Ascending aorta (tissue), 2 donors: ENCODE measurements at regions of chr18 and their contacts with region 1.

Region 1: DNA sequence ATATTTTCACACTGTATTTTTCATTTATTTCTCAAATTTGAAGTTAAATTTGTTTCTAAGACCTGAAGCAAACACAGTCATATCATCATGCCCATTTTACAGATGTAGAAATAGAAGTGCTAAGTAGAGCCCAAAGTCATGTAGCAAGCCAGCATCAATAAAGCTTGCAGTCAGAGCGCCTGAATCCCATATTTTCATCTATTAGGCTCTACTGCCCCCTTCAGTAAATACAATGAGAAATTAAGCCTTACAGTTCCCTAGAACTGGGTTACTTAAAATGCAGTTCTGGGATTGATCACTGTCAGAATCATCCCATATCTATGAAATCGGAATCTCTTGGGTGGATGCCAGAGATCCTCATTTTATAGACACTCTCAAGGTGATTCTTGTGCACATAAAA is 419.9 kb downstream of the TGIF1 start:
- DNase-seq: no peak
- H3K4me3 ChIP-seq: no peak overlapping the region
- H3K27ac ChIP-seq: no peak overlapping the region
- H3K4me1 ChIP-seq: peaks cover 0 to 6% of the 10 kb centered on the region in 2 donors
- H3K27me3 ChIP-seq: no peaks in the 10 kb centered on the region
- CTCF ChIP-seq: peak in 2 of 3 experiments; percentile 35 to 43

Region 2: DNA sequence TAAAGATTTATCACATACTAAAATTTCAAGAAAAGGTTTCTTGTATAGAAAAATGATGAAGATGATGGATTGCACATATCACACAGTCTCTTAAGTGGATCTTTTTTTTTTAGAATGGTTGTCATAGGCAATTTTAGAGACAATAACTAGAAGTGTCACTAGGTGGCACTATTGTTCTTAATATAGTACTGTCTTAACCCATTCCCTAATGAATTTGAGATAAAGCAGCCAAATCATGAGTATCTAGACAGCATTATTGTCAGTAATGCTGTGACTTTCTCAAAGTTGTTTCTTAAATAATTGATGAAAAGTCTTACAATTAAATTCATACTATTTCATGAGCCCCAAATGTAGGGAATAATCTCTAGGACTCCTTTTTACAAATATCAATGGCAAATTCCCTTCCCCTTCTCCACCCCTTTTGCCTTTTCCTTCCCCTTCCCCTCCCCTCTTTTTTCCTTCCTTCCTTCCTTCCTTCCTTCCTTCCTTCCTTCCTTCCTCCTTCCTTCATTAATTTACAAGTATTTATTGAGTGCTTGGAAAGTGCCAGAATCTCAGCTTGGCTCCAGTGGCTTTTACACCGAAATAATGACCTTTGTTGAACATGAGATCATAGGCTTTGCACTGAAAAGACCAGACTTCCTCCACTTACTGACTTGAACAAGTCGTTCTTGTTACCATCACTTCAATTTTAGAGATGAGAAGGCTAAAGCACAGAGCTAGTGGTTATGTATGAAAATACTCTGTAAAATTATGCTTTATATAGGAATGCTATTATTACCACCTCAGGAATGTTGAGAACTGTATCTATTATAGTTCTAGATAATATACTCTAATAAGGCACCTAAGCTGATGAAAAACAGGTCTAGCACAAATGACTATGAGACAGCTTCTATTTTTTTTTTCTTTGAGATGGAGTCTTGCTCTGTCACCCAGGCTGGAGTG is 588.1 kb before region 1 on chr18:
- intact Hi-C with region 1: loop called (anchors 10 kb)
- DNase-seq: no peak
- H3K4me3 ChIP-seq: no peak overlapping the region
- H3K27ac ChIP-seq: no peak overlapping the region
- H3K4me1 ChIP-seq: peaks cover 0 to 3% of the 10 kb centered on the region in 2 donors
- H3K27me3 ChIP-seq: no peaks in the 10 kb centered on the region
- CTCF ChIP-seq: peak; percentile 54 to 71 (median 69)

Region 3: GRCh38 chr18:3703732-3704176 is 166.1 kb before region 1 on chr18:
- intact Hi-C with region 1: loop called (anchors 1 kb)
- DNase-seq: peak in 1 of 2 donors; percentile 79
- H3K4me3 ChIP-seq: peak overlapping the region in 1 of 2 donors; percentile 22
- H3K27ac ChIP-seq: no peak overlapping the region
- H3K4me1 ChIP-seq: peaks cover 0 to 6% of the 10 kb centered on the region in 2 donors
- H3K27me3 ChIP-seq: no peaks in the 10 kb centered on the region
- CTCF ChIP-seq: peak; percentile 21 to 70 (median 64)

Region 4: GRCh38 chr18:3771121-3771971 is 98.5 kb before region 1 on chr18:
- intact Hi-C with region 1: loop called (anchors 2 kb)
- DNase-seq: peak; percentile 52 to 95
- H3K4me3 ChIP-seq: peak overlapping the region; percentile 57 to 58
- H3K27ac ChIP-seq: peak overlapping the region; percentile 45 to 58
- H3K4me1 ChIP-seq: peaks cover 0 to 9% of the 10 kb centered on the region in 2 donors
- H3K27me3 ChIP-seq: no peaks in the 10 kb centered on the region
- CTCF ChIP-seq: peak; percentile 94 to 95 (median 94)

Region 5: GRCh38 chr18:3906116-3906750 is 36.4 kb after region 1 on chr18:
- intact Hi-C with region 1: loop called (anchors 5 kb)
- DNase-seq: no peak
- H3K4me3 ChIP-seq: no peak overlapping the region
- H3K27ac ChIP-seq: peak overlapping the region; percentile 21 to 31
- H3K4me1 ChIP-seq: peaks cover 2 to 9% of the 10 kb centered on the region in 2 donors
- H3K27me3 ChIP-seq: no peaks in the 10 kb centered on the region
- CTCF ChIP-seq: no peak

Region 6: GRCh38 chr18:3947383-3947782 is 77.5 kb after region 1 on chr18:
- intact Hi-C with region 1: no loop called
- DNase-seq: no peak
- H3K4me3 ChIP-seq: no peak overlapping the region
- H3K27ac ChIP-seq: no peak overlapping the region
- H3K4me1 ChIP-seq: no peaks in the 10 kb centered on the region
- H3K27me3 ChIP-seq: no peaks in the 10 kb centered on the region
- CTCF ChIP-seq: no peak

Region 7: GRCh38 chr18:3966985-3967856 is 97.4 kb after region 1 on chr18:
- intact Hi-C with region 1: loop called (anchors 5 kb)
- DNase-seq: peak in 1 of 2 donors; percentile 77
- H3K4me3 ChIP-seq: no peak overlapping the region
- H3K27ac ChIP-seq: peak overlapping the region in 1 of 2 donors; percentile 53
- H3K4me1 ChIP-seq: peaks cover 4 to 6% of the 10 kb centered on the region in 2 donors
- H3K27me3 ChIP-seq: no peaks in the 10 kb centered on the region
- CTCF ChIP-seq: no peak

Region 8: GRCh38 chr18:3995476-3996102 is 125.7 kb after region 1 on chr18:
- intact Hi-C with region 1: loop called (anchors 5 kb)
- DNase-seq: peak in 1 of 2 donors; percentile 71
- H3K4me3 ChIP-seq: peak overlapping the region; percentile 23 to 47
- H3K27ac ChIP-seq: no peak overlapping the region
- H3K4me1 ChIP-seq: no peaks in the 10 kb centered on the region
- H3K27me3 ChIP-seq: no peaks in the 10 kb centered on the region
- CTCF ChIP-seq: peak; percentile 43 to 85 (median 82)